ENCODE measurements at regions of chr20 and their contacts with region 1.

Region 1: DNA sequence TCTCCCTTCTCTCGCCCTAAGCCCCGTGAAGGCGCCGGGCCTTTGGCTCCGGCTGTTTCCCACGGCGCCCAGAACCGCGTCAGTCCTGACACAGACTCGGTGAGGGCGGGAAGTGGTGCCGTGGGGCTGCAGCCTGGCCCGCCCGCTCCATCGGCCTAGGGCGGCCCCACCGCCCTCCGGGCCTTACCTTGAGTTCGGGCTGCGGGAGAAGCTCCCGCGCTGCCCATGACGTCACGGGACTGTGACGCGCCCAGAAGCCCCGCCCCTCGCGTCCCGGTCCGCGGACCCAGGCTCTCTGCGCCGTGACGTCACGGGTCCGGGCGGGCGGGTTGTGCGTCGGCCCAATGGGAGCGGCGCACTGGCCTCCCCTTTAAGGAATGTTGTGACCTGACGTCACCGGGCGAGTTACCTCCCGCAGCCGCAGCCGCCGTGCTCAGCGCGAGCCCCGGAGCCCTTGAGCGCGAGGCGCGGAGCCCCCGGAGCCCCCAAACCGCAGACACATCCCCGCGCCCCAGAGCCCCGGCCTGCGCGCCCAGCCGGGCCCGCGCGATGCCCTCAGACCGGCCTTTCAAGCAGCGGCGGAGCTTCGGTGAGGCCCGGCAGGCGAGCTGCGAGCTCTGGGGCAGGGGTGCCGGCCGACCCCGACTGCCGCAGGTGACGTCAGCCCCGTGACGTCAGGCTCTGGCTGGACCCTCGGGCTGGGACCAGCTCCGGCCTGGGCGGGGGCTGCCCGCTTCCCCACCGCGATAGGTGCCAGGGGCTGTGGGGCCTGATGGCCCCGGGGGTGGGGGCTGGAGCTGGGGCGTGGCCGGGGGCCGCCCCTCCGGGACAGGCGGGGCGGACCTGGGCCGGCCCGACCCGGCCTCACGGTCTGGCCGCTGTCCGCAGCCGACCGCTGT is at the start of gene MAP1LC3A:
- DNase-seq: peak; percentile 97 to 98
- ATAC-seq: peak; percentile 87 to 96 (median 88)
- H3K4me3 ChIP-seq: peak within 1 kb of the TSS; percentile 70
- H3K4me3 Mint-ChIP-seq: peak within 1 kb of the TSS; percentile 89
- H3K27ac ChIP-seq: peak within 1 kb of the TSS; percentile 85
- H3K27ac Mint-ChIP-seq: peak within 1 kb of the TSS; percentile 90 to 96
- H3K4me1 ChIP-seq: peaks cover 7% of the 10 kb centered on the region
- H3K4me1 Mint-ChIP-seq: peaks cover 7 to 25% of the 10 kb centered on the region in 2 donors
- H3K27me3 ChIP-seq: no peaks in the 10 kb centered on the region
- H3K27me3 Mint-ChIP-seq: no peaks in the 10 kb centered on the region
- CTCF ChIP-seq: no peak
- total RNA-seq, gene MAP1LC3A: 12.7 to 20.4 (median 19.8) TPM

Region 2: GRCh38 chr20:34302723-34303528 is 255.6 kb before region 1 on chr20 and contains the start of gene AHCY:
- intact Hi-C with region 1: loop called (anchors 1 kb)
- DNase-seq: peak; percentile 85 to 95
- ATAC-seq: peak; percentile 90 to 96 (median 91)
- H3K4me3 ChIP-seq: peak within 1 kb of the TSS; percentile 85
- H3K4me3 Mint-ChIP-seq: peak within 1 kb of the TSS; percentile 95
- H3K27ac ChIP-seq: peak within 1 kb of the TSS; percentile 68
- H3K27ac Mint-ChIP-seq: peak within 1 kb of the TSS; percentile 88
- H3K4me1 ChIP-seq: peaks cover 14% of the 10 kb centered on the region
- H3K4me1 Mint-ChIP-seq: peaks cover 0 to 4% of the 10 kb centered on the region in 2 donors
- H3K27me3 ChIP-seq: no peaks in the 10 kb centered on the region
- H3K27me3 Mint-ChIP-seq: no peaks in the 10 kb centered on the region
- CTCF ChIP-seq: peak; percentile 33
- total RNA-seq, gene AHCY: 7.1 to 8.3 (median 7.7) TPM

Region 3: DNA sequence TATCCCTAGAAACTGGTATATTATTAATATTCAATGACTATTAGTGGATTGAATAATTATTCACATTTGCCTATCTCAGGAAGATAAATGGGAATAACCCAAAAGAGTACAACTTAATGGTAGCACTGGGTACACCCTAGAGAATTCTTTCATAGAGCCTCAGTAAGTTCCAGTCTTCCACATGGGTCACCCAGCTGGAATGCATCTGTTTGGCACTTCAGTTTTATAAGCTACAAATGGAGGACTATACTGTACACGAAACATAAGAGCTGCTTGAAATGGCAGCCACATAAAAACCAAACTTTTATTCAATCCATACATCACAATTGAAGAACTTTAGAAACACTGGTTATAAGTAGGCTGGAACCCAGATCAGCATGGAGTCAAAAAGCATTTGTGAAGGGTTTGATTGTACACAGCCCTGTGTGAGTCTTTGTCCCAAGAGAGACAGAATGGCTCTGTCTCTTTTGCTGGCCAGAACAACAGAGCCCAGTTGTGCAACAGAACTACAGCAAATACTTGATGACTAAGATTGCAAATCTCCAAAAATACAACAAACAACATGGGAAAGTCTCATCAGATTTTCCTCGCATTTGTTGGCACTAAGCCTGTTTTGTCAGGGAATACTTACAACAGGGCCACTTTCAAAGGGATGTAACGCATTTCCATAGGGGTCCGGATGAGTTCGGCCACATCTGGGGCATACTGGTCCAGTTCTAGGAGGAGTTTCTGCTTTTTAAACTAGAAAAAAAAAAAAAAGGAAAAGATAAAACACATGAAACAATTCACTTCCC is 78.9 kb after region 1 on chr20:
- intact Hi-C with region 1: no loop called
- DNase-seq: no peak
- ATAC-seq: no peak
- H3K4me3 ChIP-seq: no peak overlapping the region
- H3K4me3 Mint-ChIP-seq: no peak overlapping the region
- H3K27ac ChIP-seq: no peak overlapping the region
- H3K27ac Mint-ChIP-seq: no peak overlapping the region
- H3K4me1 ChIP-seq: no peaks in the 10 kb centered on the region
- H3K4me1 Mint-ChIP-seq: no peaks in the 10 kb centered on the region
- H3K27me3 ChIP-seq: no peaks in the 10 kb centered on the region
- H3K27me3 Mint-ChIP-seq: no peaks in the 10 kb centered on the region
- CTCF ChIP-seq: no peak

Region 4: DNA sequence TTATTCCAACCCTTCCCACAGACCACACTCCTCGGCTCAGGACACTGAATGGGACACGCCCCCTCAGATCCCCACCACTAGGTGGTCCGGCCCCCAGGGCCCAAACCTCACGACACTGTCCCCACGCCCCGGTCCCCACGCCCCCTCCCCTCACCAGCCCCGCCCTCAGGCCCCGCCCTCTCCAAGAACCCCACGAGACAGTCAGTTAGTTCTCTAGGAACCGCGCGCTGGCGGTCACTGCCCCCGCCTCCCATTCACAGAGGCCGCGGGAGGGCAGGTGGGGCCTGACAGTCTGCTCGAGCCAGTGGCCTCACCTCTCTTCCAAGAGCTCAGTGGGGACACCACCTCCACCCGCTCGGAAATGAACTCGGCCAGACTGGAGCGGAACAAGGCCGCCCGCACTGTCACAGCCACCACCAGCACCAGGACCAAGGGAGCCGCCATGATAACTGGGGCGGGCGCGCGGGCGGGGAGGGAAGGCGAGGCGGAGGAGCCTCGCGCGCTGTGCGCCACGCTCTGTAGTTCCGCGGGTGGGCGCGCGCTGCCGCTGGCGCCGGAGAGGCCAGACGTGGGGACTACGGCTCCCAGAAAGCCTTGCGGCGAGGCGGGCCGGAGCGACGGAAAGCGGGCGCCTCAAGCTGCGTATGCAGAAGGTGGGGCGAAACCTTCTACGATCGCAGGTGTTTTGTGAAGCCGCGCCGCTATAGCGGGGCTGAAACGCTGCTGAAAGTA is 118.2 kb after region 1 on chr20 and contains the start of gene PIGU:
- intact Hi-C with region 1: loop called (anchors 1 kb)
- DNase-seq: peak; percentile 94 to 98
- ATAC-seq: peak; percentile 97 to 100 (median 97)
- H3K4me3 ChIP-seq: peak within 1 kb of the TSS; percentile 93
- H3K4me3 Mint-ChIP-seq: peak within 1 kb of the TSS; percentile 95
- H3K27ac ChIP-seq: peak within 1 kb of the TSS; percentile 80
- H3K27ac Mint-ChIP-seq: peak within 1 kb of the TSS; percentile 85 to 90
- H3K4me1 ChIP-seq: peaks cover 9% of the 10 kb centered on the region
- H3K4me1 Mint-ChIP-seq: peaks cover 15 to 16% of the 10 kb centered on the region in 2 donors
- H3K27me3 ChIP-seq: no peaks in the 10 kb centered on the region
- H3K27me3 Mint-ChIP-seq: no peaks in the 10 kb centered on the region
- CTCF ChIP-seq: peak; percentile 29
- total RNA-seq, gene PIGU: 7.0 to 11.1 (median 8.2) TPM

Region 5: GRCh38 chr20:34704177-34705007 is 145.8 kb after region 1 on chr20 and contains the start of gene TP53INP2:
- intact Hi-C with region 1: loop called (anchors 5 kb)
- DNase-seq: peak; percentile 88 to 95
- ATAC-seq: peak; percentile 65 to 82 (median 71)
- H3K4me3 ChIP-seq: peak within 1 kb of the TSS; percentile 56
- H3K4me3 Mint-ChIP-seq: peak within 1 kb of the TSS; percentile 94
- H3K27ac ChIP-seq: peak within 1 kb of the TSS; percentile 56
- H3K27ac Mint-ChIP-seq: peak within 1 kb of the TSS; percentile 94 to 98
- H3K4me1 ChIP-seq: peaks cover 27% of the 10 kb centered on the region
- H3K4me1 Mint-ChIP-seq: peaks cover 16 to 27% of the 10 kb centered on the region in 2 donors
- H3K27me3 ChIP-seq: no peaks in the 10 kb centered on the region
- H3K27me3 Mint-ChIP-seq: peaks cover 0 to 12% of the 10 kb centered on the region in 2 donors
- CTCF ChIP-seq: no peak
- total RNA-seq, gene TP53INP2: 30.7 to 56.3 (median 35.9) TPM

Measured in natural killer cell (primary cell).